Transverse colon (tissue), 4 donors: ENCODE measurements at regions of chr4 and their contacts with region 1.

Region 1: DNA sequence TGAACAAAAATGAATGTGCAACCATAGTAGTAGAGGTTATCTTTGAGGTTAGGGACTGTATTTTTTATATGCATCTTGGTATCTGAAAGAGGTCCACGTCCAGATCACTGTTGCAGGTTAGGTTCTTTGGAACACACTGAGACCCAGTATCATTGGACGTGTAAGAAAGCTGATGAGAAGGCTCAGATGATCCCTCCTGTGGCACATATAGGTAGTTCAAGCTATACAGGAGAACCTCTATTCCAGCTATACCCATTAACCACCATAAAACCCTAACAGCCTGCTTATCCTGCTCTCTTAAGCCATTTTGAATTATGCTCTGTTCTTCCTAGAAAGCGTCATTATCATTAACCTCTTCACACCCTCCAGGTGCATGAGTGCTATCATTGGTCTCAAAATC is 930.7 kb upstream of the HS3ST1 start:
- DNase-seq: no peak
- H3K4me3 ChIP-seq: no peak overlapping the region
- H3K27ac ChIP-seq: no peak overlapping the region
- H3K4me1 ChIP-seq: peaks cover 0 to 6% (median 0%) of the 10 kb centered on the region in 4 donors
- H3K27me3 ChIP-seq: no peaks in the 10 kb centered on the region
- CTCF ChIP-seq: no peak
- EP300 ChIP-seq: no peak
- POLR2A ChIP-seq: no peak

Region 2: GRCh38 chr4:13933191-13933590 is 1573.8 kb after region 1 on chr4:
- in situ Hi-C with region 1: no loop called
- intact Hi-C with region 1: loop called (anchors 10 kb)
- DNase-seq: no peak
- H3K4me3 ChIP-seq: no peak overlapping the region
- H3K27ac ChIP-seq: no peak overlapping the region
- H3K4me1 ChIP-seq: no peaks in the 10 kb centered on the region
- H3K27me3 ChIP-seq: no peaks in the 10 kb centered on the region
- CTCF ChIP-seq: no peak
- EP300 ChIP-seq: no peak
- POLR2A ChIP-seq: no peak